ENCODE measurements at regions of chr6 and their contacts with region 1.

Region 1: GRCh38 chr6:31197559-31198305 is 27.2 kb upstream of the POU5F1 start:
- DNase-seq: peak; percentile 93 to 96 (median 94)
- ATAC-seq: peak; percentile 88 to 94 (median 90)
- H3K4me3 ChIP-seq: peak overlapping the region; percentile 48 to 87 (median 80)
- H3K27ac ChIP-seq: peak overlapping the region; percentile 95 to 99 (median 98)
- H3K4me1 ChIP-seq: peaks cover 0 to 31% (median 11%) of the 10 kb centered on the region in 12 donors
- H3K27me3 ChIP-seq: no peaks in the 10 kb centered on the region
- CTCF ChIP-seq: no peak
- POLR2A ChIP-seq: peak in 1 of 2 donors; percentile 64

Region 2: DNA sequence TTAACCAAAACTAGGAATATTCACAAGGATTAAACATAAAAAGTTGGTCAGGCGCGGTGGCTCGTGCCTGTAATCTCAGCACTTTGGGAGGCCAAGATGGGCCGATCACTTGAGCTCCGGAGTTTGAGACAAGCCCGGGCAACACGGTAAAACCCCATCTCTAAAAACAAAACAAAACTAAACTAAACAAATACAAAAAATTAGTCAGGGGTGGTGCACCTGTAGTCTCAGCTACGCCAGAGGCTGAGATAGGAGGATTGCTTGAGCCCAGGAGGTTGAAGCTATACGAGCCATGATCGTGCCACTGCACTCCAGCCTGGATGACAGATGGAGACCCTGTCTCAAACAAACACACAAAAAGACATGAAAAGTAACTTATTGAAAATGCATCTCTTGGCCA is 62.0 kb before region 1 on chr6:
- intact Hi-C with region 1: loop called (anchors 1 to 2 kb)
- DNase-seq: no peak
- ATAC-seq: no peak
- H3K4me3 ChIP-seq: no peak overlapping the region
- H3K27ac ChIP-seq: no peak overlapping the region
- H3K4me1 ChIP-seq: peaks cover 0 to 15% (median 9%) of the 10 kb centered on the region in 12 donors
- H3K27me3 ChIP-seq: no peaks in the 10 kb centered on the region
- CTCF ChIP-seq: no peak
- POLR2A ChIP-seq: no peak

Region 3: GRCh38 chr6:31227143-31227542 is 29.4 kb after region 1 on chr6:
- intact Hi-C with region 1: loop called in 1 of 10 experiments (anchors 1 kb)
- DNase-seq: no peak
- ATAC-seq: no peak
- H3K4me3 ChIP-seq: no peak overlapping the region
- H3K27ac ChIP-seq: no peak overlapping the region
- H3K4me1 ChIP-seq: peaks cover 0 to 21% (median 2%) of the 10 kb centered on the region in 12 donors
- H3K27me3 ChIP-seq: no peaks in the 10 kb centered on the region
- CTCF ChIP-seq: no peak
- POLR2A ChIP-seq: no peak

Region 4: GRCh38 chr6:31356946-31357466 is 159.3 kb after region 1 on chr6 and contains the start of gene HLA-B:
- intact Hi-C with region 1: loop called in 2 of 10 experiments (anchors 2 to 5 kb)
- DNase-seq: peak; percentile 77 to 97 (median 93)
- ATAC-seq: peak; percentile 93 to 98 (median 98)
- H3K4me3 ChIP-seq: peak within 1 kb of the TSS; percentile 49 to 98 (median 71)
- H3K27ac ChIP-seq: peak within 1 kb of the TSS in 11 of 12 donors; percentile 70 to 100 (median 86)
- H3K4me1 ChIP-seq: peaks cover 0 to 30% (median 2%) of the 10 kb centered on the region in 12 donors
- H3K27me3 ChIP-seq: peaks cover 0 to 15% (median 0%) of the 10 kb centered on the region in 9 donors
- CTCF ChIP-seq: no peak
- POLR2A ChIP-seq: peak in 1 of 2 donors; percentile 92
- total RNA-seq, gene HLA-B: 235 to 2,858 (median 371) TPM

Region 5: DNA sequence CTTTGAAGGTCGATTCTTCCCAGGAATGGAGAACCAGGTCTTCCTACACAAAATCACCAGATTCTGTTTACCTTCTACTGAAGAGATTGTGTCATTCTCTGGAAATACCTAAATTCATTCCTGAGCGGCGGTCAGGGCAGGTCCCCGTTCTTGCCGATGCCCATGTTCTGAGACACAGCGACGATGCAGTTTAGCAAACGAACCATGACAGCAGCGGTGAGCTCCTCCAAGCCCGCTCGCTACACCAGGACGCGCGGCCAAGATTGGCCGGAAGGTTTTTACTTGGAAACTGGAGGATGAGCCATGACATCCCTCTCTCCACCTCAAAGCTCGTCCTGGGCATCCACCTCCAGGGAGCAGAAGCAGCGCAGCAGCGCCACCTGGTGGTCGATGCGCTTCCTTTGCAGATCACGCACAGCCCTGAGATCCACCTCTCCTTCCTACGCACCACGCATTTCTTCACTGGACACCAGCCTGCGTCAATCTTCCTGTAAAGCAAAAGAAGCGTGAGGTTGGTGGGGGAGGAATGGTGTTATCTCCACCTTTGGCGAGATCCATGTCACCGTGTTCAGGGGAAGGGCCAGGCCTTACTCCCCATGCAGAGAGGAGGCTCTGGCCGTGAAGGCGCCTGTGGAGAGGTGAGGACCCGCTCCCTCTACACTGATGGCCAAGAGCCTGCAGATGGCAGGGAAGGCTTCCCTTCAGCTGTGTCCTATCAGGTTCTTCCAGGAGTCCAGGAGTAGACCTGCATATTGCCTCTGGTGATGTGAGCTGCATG is 169.2 kb after region 1 on chr6:
- intact Hi-C with region 1: loop called (anchors 1 to 5 kb)
- DNase-seq: peak; percentile 84 to 93 (median 86)
- ATAC-seq: peak; percentile 95 to 100 (median 100)
- H3K4me3 ChIP-seq: peak overlapping the region in 9 of 12 donors; percentile 34 to 52 (median 47)
- H3K27ac ChIP-seq: no peak overlapping the region
- H3K4me1 ChIP-seq: peaks cover 0 to 8% (median 4%) of the 10 kb centered on the region in 12 donors
- H3K27me3 ChIP-seq: peaks cover 0 to 42% (median 0%) of the 10 kb centered on the region in 9 donors
- CTCF ChIP-seq: peak; percentile 80 to 97 (median 92)
- POLR2A ChIP-seq: no peak

Measured in heart left ventricle (tissue), 16 donors.